Activated naive CD4-positive, alpha-beta T cell treated with anti-CD3 and anti-CD28 coated beads for 36 hours (primary cell): ENCODE measurements at regions of chr7 and their contacts with region 1.

Region 1: GRCh38 chr7:149422129-149422913 is 38.5 kb downstream of the ZNF777 start:
- DNase-seq: peak; percentile 66
- H3K4me3 Mint-ChIP-seq: peak overlapping the region; percentile 67
- H3K27ac Mint-ChIP-seq: peak overlapping the region; percentile 65
- H3K4me1 Mint-ChIP-seq: peaks cover 7% of the 10 kb centered on the region
- H3K27me3 Mint-ChIP-seq: peaks cover 2% of the 10 kb centered on the region

Region 2: GRCh38 chr7:148912758-148913541 is 509.4 kb before region 1 on chr7:
- CTCF ChIA-PET with region 1: no interaction called
- intact Hi-C with region 1: no loop called
- DNase-seq: peak; percentile 88
- H3K4me3 Mint-ChIP-seq: peak overlapping the region; percentile 55
- H3K27ac Mint-ChIP-seq: peak overlapping the region; percentile 96
- H3K4me1 Mint-ChIP-seq: peaks cover 73% of the 10 kb centered on the region
- H3K27me3 Mint-ChIP-seq: no peaks in the 10 kb centered on the region

Region 3: GRCh38 chr7:149147072-149147751 is 275.1 kb before region 1 on chr7 and contains the start of gene ZNF398:
- CTCF ChIA-PET with region 1: interaction called, 3 read pairs
- intact Hi-C with region 1: loop called (anchors 1 kb)
- DNase-seq: peak; percentile 73
- H3K4me3 Mint-ChIP-seq: peak within 1 kb of the TSS; percentile 87
- H3K27ac Mint-ChIP-seq: peak within 1 kb of the TSS; percentile 91
- H3K4me1 Mint-ChIP-seq: peaks cover 33% of the 10 kb centered on the region
- H3K27me3 Mint-ChIP-seq: no peaks in the 10 kb centered on the region
- total RNA-seq, gene ZNF398: 4.3 to 5.0 TPM

Region 4: DNA sequence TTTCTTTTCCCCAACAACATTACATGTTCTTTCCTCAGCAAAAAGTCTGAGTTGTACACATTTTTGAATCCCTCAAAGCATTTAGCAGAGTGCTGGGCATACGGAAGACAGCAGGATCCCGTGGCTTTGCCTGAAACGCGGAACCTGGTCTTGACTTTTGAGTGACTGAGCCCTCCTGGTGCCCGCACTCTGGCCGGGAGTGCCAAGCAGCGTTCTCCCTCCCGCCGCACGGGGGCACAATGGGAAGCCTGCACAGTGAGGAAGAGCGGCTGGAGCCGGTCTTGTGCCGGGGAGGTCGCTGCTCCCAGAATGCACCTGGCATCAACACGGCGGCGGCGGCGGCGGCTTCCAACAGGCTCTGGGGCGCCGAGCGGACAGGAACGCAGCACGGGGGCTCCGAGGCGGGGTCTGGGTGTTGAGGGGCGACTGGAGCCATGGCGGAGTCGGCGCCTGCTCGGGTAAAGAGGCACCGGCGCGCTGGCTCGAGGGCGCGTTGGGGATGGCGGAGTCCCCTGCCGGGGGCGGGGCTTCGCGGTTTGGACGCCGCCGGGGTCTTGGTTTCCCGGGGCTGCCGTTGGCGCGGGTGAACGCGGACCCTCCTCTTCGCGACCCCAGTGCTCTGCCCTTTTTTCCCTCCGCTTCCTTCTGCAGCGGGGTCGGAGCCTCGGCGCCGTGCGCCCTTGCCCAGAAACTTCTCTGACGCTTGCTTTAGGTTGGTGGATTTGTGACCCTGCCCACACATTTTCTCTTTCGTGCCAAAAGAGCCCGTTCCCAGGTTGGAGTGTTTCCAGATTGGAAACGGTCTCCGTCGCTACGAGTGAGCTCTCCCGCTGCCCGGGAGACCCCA is 182.8 kb before region 1 on chr7 and contains the start of gene ZNF212:
- CTCF ChIA-PET with region 1: interaction called, 4 read pairs
- intact Hi-C with region 1: loop called (anchors 1 kb)
- DNase-seq: peak; percentile 93
- H3K4me3 Mint-ChIP-seq: peak within 1 kb of the TSS; percentile 89
- H3K27ac Mint-ChIP-seq: peak within 1 kb of the TSS; percentile 90
- H3K4me1 Mint-ChIP-seq: peaks cover 38% of the 10 kb centered on the region
- H3K27me3 Mint-ChIP-seq: no peaks in the 10 kb centered on the region
- total RNA-seq, gene ZNF212: 9.0 to 10.4 TPM

Region 5: GRCh38 chr7:149284850-149285626 is 137.3 kb before region 1 on chr7:
- CTCF ChIA-PET with region 1: interaction called, 8 read pairs
- intact Hi-C with region 1: loop called (anchors 1 kb)
- DNase-seq: peak; percentile 99
- H3K4me3 Mint-ChIP-seq: peak overlapping the region; percentile 79
- H3K27ac Mint-ChIP-seq: no peak overlapping the region
- H3K4me1 Mint-ChIP-seq: peaks cover 36% of the 10 kb centered on the region
- H3K27me3 Mint-ChIP-seq: no peaks in the 10 kb centered on the region

Region 6: DNA sequence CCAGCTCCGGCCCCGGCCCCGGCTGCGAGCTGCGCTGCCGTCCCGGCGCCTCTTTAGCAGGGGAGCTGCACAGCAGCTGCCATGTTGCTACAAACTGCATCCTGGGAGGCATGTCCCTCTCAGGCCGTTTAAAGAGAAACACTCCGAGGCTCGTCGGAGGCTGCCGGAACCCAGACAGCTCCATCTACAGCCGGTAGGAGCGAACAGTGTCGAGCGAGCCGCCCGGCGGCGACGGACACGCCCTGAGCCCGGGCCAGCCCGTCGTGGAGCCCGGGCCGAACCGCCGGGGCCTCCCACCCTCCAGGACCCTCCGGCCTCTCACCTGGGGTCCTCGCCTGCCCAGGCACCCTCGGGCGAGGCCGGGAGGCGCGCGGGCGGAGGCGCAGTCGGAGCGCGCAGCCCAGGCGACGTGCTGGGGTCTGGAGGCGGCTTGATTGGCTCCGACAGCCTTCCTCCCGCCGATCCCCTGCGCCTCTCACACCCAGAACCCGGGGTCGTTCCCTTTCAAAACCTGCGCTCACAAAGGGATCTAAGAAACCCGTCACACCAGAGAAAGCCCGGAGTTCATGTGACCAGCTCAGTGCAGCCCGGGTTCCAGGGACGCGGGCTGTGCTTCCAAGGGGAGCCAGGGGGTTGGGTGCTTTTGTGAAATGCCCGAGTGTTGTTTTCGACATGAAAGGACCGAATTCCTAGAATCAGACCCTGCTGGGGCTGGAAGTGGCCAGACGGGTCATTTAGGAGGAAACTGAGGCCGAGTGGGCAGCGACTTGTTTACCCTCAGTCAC is 38.4 kb after region 1 on chr7 and contains the start of gene ZNF777:
- CTCF ChIA-PET with region 1: interaction called, 12 read pairs
- intact Hi-C with region 1: loop called (anchors 1 kb)
- DNase-seq: peak; percentile 85
- H3K4me3 Mint-ChIP-seq: peak within 1 kb of the TSS; percentile 80
- H3K27ac Mint-ChIP-seq: peak within 1 kb of the TSS; percentile 59
- H3K4me1 Mint-ChIP-seq: peaks cover 22% of the 10 kb centered on the region
- H3K27me3 Mint-ChIP-seq: peaks cover 3% of the 10 kb centered on the region
- total RNA-seq, gene ZNF777: 8.7 to 9.7 TPM

Region 7: DNA sequence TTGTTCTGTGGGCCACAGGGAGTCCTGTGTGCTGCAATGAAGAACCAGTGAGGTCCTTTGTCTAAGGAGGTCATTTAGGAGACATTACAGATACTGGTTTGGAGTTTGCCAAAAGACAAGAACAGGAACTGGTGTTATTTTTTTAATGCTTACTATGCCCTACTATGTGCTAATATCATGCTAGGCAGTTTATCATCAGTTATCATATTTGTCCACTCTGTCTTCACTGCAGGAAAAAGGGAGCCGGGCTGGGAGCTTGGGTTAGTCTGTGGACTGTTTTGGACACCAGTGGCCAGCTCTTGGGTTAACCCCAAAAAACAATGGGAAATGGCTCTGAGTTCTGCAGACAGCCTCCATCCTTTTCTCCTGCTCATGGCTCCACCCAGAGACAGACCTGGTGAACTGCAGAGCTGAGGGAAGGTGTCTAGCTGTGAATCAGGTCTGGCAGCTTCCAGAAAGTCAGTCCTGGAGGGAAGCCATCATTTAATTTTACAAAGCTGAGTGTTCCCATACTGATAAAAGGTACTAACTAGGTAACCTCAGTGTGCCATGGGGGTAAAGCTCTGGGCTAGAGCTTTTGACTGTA is 176.5 kb after region 1 on chr7:
- CTCF ChIA-PET with region 1: interaction called, 10 read pairs
- intact Hi-C with region 1: loop called (anchors 1 kb)
- DNase-seq: peak; percentile 69
- H3K4me3 Mint-ChIP-seq: no peak overlapping the region
- H3K27ac Mint-ChIP-seq: peak overlapping the region; percentile 51
- H3K4me1 Mint-ChIP-seq: peaks cover 36% of the 10 kb centered on the region
- H3K27me3 Mint-ChIP-seq: no peaks in the 10 kb centered on the region

Region 8: DNA sequence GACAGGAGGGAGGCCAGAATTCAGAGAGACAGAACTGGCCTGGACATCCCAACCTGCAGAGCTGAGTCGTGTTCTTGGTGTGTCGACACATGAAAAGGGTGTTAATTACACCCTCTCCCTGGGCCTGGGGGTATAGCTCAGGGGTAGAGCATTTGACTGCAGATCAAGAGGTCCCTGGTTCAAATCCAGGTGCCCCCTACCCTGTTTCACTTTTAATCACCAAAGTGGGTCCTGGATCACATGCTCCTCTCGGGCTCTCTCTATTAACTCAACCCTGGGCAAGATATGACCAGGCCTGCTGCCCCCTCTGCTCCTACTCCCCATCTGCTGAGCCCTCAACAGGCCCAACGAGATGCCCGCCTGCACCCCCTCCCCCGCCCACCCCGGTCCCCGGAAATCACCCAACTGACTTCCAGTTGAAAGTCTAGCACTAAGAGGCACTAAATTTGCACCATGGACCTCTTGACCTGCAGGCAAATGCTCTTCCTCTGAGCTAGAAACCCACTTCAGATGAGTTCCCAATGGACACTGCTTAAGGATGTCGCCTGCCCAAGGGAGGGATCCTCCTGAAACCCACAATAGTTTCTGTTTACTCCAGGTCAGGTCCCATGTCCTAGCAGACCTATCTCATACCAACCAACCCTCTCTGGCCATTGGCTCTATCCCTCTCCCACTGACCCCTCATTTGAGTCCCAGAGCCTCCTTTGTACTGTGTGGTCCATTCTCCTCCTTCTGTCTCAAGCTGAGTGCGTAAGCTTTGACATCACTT is 213.4 kb after region 1 on chr7:
- CTCF ChIA-PET with region 1: no interaction called
- intact Hi-C with region 1: no loop called
- DNase-seq: no peak
- H3K4me3 Mint-ChIP-seq: no peak overlapping the region
- H3K27ac Mint-ChIP-seq: no peak overlapping the region
- H3K4me1 Mint-ChIP-seq: no peaks in the 10 kb centered on the region
- H3K27me3 Mint-ChIP-seq: peaks cover 3% of the 10 kb centered on the region